ENCODE measurements at regions of chr18 and their contacts with region 1.

Region 1: GRCh38 chr18:48851599-48851960 is 99.2 kb downstream of the SMAD7 start:
- DNase-seq: peak; percentile 69 to 73
- ATAC-seq: peak; percentile 56 to 86 (median 74)
- H3K4me3 ChIP-seq: peak overlapping the region in 2 of 10 donors; percentile 3 to 23
- H3K27ac ChIP-seq: peak overlapping the region; percentile 49 to 92 (median 87)
- H3K4me1 ChIP-seq: peaks cover 29 to 69% (median 65%) of the 10 kb centered on the region in 9 donors
- H3K27me3 ChIP-seq: no peaks in the 10 kb centered on the region
- CTCF ChIP-seq: no peak

Region 2: GRCh38 chr18:48785091-48785614 is 66.4 kb before region 1 on chr18:
- intact Hi-C with region 1: loop called in 2 of 10 experiments (anchors 5 to 10 kb)
- DNase-seq: no peak
- ATAC-seq: no peak
- H3K4me3 ChIP-seq: no peak overlapping the region
- H3K27ac ChIP-seq: peak overlapping the region in 2 of 10 donors; percentile 48 to 80
- H3K4me1 ChIP-seq: peaks cover 32 to 97% (median 75%) of the 10 kb centered on the region in 9 donors
- H3K27me3 ChIP-seq: no peaks in the 10 kb centered on the region
- CTCF ChIP-seq: no peak

Region 3: DNA sequence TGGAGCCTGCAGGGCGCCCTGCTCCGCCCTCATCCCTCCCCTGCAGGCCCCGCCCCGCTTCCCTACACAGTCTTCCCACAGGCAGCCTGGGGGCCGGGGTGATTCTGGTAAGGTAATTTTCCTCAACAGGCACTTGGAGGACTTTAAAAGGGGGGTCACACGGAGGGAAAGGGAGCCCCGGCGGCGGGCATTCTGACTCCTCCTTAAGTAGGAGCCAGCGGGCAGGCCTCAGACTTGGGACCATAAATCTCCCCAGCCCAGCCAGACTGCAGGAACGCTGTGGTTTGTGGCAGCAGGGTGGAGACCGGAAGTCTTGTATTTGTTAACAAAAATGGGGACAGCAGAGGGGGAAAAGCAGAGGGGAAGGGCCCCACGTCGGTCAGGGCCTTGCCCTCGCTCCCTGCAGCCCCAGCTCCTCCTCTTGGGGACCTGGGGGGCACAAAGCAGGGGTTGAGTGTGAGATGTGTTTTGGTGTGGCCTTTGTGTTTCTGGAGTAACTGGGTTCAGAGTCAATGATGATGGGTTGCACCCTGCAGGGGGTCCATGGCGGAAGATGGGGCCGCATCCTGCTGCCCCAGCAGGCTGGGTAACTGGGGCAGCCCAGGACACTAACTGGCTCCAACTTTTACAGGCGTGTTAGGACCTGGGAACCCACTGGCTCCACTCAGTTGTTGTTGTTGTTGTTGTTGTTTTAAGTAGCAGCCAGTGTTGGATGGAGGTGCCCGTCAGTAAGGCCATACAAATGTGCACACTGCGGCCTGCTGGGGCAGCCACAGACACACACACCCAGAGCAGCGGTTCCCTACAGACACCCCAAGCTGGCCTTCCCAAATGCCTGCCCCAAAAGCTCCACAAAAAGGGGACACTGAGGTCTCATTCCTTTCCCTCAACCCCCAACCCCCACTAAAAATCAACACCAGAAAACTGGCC is 71.5 kb after region 1 on chr18:
- intact Hi-C with region 1: loop called in 1 of 10 experiments (anchors 5 kb)
- DNase-seq: peak in 1 of 2 donors; percentile 62
- ATAC-seq: peak; percentile 61 to 80 (median 69)
- H3K4me3 ChIP-seq: peak overlapping the region in 9 of 10 donors; percentile 18 to 49 (median 36)
- H3K27ac ChIP-seq: peak overlapping the region; percentile 41 to 86 (median 72)
- H3K4me1 ChIP-seq: peaks cover 52 to 100% (median 64%) of the 10 kb centered on the region in 9 donors
- H3K27me3 ChIP-seq: no peaks in the 10 kb centered on the region
- CTCF ChIP-seq: peak in 1 of 9 donors; percentile 3

Region 4: DNA sequence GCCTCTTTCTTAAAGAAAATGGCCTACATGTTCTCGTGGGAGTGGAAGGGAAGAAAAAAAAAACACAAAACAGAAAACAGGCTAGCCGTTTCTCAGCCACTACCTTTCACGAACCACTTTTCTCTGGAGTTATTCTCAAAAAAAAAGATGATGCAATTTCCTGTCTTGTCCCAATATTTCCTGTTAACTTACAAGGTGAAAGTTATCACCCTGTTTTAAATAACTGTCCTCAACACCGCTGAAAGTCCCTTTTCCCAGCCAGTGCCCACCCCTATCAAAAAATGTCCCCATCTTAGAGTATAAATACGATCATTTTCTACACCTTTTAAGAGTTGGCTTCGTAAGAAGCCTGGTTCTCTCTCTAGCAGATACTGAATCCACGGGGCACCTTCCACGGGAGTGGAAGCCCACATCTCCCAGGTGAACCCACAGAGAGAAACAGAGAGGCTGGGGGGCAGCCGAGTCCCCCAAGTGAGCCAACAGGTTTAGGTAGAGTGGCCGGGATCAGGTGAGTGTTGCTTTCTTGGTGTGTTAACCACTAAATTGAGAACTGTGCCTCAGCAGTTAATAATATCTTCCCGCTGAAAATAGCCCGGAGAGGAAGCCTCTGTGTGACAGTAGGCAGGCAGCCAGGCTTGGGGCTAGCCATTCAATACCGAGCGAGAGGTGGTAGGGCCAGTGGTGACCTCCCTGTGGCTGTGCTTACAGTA is 83.3 kb after region 1 on chr18:
- intact Hi-C with region 1: loop called in 2 of 10 experiments (anchors 5 kb)
- DNase-seq: peak; percentile 73 to 86
- ATAC-seq: peak; percentile 45 to 81 (median 76)
- H3K4me3 ChIP-seq: peak overlapping the region in 7 of 10 donors; percentile 15 to 44 (median 28)
- H3K27ac ChIP-seq: peak overlapping the region; percentile 59 to 96 (median 85)
- H3K4me1 ChIP-seq: peaks cover 79 to 98% (median 96%) of the 10 kb centered on the region in 9 donors
- H3K27me3 ChIP-seq: no peaks in the 10 kb centered on the region
- CTCF ChIP-seq: no peak

Region 5: DNA sequence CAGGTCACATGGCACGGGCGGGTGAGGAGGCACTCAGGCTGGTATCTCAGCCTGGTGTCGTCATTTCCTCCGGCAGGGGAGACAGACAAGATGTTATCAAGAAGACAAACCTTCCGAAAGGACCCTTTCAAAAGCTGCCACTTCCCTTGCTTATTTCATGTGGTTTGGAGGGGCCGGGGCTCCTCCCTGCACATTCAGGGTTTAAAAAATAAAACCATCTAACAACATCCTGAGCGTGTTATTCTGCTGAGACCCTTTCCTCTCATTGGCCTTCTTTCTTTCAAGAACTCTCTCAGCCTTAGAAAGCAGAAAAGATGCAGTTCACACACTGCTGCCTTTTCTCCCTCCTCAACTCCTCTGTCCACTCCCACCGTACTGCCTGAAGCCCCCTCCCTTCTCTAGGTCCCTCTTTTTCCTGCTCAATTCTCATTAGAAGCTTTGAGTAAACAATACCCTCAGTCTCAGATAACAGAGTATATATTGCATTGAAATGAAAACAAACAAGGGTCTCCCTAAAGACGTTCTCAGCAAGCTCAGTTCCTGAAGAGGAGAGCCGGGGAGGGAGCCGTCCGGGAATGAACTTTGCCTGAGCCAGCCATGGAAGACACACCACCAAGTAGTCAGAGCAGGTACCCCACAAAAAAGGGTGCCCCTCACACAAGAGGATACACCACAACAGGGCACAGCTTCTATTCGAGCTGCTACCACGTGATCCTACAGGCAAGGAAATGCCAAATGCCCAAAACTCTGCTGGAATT is 89.5 kb after region 1 on chr18:
- intact Hi-C with region 1: loop called in 3 of 10 experiments (anchors 5 kb)
- DNase-seq: no peak
- ATAC-seq: no peak
- H3K4me3 ChIP-seq: peak overlapping the region in 5 of 10 donors; percentile 1 to 94 (median 43)
- H3K27ac ChIP-seq: peak overlapping the region in 9 of 10 donors; percentile 63 to 99 (median 81)
- H3K4me1 ChIP-seq: peaks cover 59 to 99% (median 97%) of the 10 kb centered on the region in 9 donors
- H3K27me3 ChIP-seq: no peaks in the 10 kb centered on the region
- CTCF ChIP-seq: no peak